HEK293T (cell line): ENCODE measurements at regions of chr4 and their contacts with region 1.

Region 1: DNA sequence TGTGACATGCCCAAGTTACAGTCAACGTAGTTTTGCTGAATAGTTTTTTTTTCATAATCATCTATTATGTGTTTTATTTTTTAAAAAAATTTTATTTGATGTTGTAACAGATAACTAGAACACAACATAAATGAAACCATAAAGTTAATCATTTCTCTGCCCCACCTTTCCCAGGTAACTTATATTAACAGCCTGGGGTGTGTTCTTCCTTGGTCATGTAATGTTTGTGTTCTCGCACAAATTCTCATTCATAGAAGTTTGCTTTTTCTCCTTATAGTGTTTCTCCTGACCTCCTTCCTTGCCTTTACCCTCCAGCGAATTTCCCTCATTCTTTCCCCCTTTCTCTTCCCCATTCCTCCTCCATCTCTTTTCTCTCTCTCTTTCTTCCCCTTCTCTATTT is 214.8 kb downstream of the SOWAHB start:
- DNase-seq: no peak

Region 2: GRCh38 chr4:76589872-76590797 is 93.0 kb before region 1 on chr4:
- CTCF ChIA-PET with region 1: no interaction called
- POLR2A ChIA-PET with region 1: no interaction called
- DNase-seq: no peak

Region 3: GRCh38 chr4:76601791-76602190 is 81.4 kb before region 1 on chr4:
- CTCF ChIA-PET with region 1: no interaction called
- POLR2A ChIA-PET with region 1: no interaction called
- DNase-seq: no peak

Region 4: DNA sequence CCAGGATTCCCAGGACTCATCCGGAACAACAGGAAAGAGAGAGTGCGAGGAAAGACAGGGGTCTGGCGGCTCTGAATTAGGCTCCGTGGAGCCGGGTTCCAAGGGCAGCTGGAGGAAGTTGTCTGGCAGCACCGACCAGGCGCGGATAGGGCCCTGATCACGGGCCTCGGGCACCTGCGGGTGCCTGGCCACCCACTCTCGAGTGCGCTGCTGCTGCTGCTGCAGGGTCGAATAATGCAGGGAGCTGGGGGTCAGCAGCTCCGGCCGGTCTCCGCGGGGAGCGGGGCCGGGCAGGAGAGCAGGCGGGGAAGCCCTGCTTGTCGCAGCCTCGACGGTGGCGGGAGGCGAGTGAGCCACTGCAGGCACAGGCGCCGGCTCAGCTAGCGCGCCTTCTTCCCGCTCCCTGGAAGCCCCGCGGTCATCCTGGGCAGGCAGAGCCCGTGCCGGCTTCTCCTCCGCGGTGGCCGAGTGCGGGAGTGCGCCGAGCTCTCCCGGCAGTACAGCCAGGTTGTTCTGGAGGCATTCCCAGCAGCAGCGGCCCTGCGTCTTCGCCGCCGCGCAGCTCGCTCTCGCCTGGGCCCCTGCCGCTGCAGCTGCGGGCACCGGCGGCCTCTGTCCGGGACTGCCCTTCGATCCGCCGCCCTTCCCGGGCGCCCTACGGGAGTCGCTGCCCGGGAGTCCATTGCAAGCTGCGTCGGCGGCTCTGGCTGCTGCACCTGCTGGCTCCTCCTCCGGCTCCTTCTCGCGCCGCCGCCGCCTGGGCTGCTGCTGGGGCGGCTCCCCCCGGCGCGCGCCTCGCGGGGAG is 213.8 kb after region 1 on chr4:
- CTCF ChIA-PET with region 1: interaction called, 11 read pairs
- POLR2A ChIA-PET with region 1: no interaction called
- DNase-seq: peak; percentile 62

Region 5: GRCh38 chr4:76984127-76984526 is 301.0 kb after region 1 on chr4:
- CTCF ChIA-PET with region 1: no interaction called
- POLR2A ChIA-PET with region 1: no interaction called
- DNase-seq: peak; percentile 24